ENCODE measurements at regions of chr16 and their contacts with region 1.

Region 1: GRCh38 chr16:31179747-31180459 is at the start of gene FUS:
- DNase-seq: peak; percentile 87 to 89
- H3K4me3 ChIP-seq: peak within 1 kb of the TSS; percentile 59 to 98 (median 84)
- H3K27ac ChIP-seq: peak within 1 kb of the TSS; percentile 88 to 98 (median 97)
- H3K4me1 ChIP-seq: peaks cover 25 to 26% of the 10 kb centered on the region in 2 donors
- H3K27me3 ChIP-seq: no peaks in the 10 kb centered on the region
- CTCF ChIP-seq: peak in 1 of 6 experiments; percentile 7
- POLR2A ChIP-seq: peak; percentile 97 to 99
- total RNA-seq, gene FUS: 41.7 to 88.5 (median 70.5) TPM

Region 2: GRCh38 chr16:31010585-31011325 is 169.1 kb before region 1 on chr16 and contains the start of gene STX1B:
- intact Hi-C with region 1: no loop called
- DNase-seq: no peak
- H3K4me3 ChIP-seq: no peak within 1 kb of the TSS
- H3K27ac ChIP-seq: no peak within 1 kb of the TSS
- H3K4me1 ChIP-seq: no peaks in the 10 kb centered on the region
- H3K27me3 ChIP-seq: peaks cover 6% of the 10 kb centered on the region
- CTCF ChIP-seq: no peak
- POLR2A ChIP-seq: no peak
- total RNA-seq, gene STX1B: 0.34 to 0.40 TPM in 2 of 4 donors, not detected in the others

Region 3: DNA sequence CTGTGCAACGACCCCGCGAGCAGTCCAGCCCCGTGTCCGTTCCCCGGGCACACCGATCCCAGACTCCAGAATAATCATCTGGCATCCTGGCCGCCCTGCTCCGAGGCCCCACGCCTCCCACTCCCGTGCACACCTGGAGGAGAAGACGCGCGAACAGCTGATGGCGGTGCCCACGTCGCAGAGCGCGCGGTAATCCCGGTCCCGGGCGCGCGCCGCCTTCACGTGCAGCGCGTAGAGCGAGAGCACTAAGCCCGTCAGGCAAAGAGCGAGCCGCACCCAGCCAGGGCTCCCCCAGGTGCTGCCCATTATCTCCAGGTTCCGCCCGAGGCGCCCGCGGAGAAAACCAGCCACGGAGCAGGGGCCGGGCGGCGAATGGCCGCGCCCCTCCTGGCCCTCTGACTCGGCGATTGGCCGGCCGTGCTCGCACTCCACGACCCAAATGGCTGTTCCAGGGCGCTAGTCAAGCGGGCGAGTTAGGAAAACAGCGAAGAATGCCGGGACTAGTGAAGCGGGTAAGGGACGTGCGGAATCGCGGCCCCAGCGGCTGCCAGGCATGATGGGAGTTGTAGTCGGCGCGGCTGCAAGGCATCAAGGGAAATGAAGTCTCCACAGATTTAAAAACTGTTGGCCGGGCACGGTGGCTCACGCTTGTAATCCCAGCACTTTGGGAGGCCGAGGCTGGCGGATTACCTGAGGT is 85.3 kb before region 1 on chr16 and contains the start of gene VKORC1:
- intact Hi-C with region 1: loop called (anchors 10 kb)
- DNase-seq: peak; percentile 96 to 97
- H3K4me3 ChIP-seq: peak within 1 kb of the TSS; percentile 47 to 65 (median 58)
- H3K27ac ChIP-seq: peak within 1 kb of the TSS; percentile 51 to 81 (median 75)
- H3K4me1 ChIP-seq: peaks cover 9% of the 10 kb centered on the region in 2 donors
- H3K27me3 ChIP-seq: no peaks in the 10 kb centered on the region
- CTCF ChIP-seq: no peak
- POLR2A ChIP-seq: peak in 1 of 2 donors; percentile 80
- total RNA-seq, gene VKORC1: 58.7 to 145 (median 104) TPM

Region 4: GRCh38 chr16:31459722-31460581 is 280.0 kb after region 1 on chr16:
- intact Hi-C with region 1: loop called (anchors 10 kb)
- DNase-seq: peak; percentile 100
- H3K4me3 ChIP-seq: peak overlapping the region in 2 of 3 donors; percentile 66 to 79
- H3K27ac ChIP-seq: peak overlapping the region; percentile 96 to 100 (median 98)
- H3K4me1 ChIP-seq: peaks cover 26 to 36% of the 10 kb centered on the region in 2 donors
- H3K27me3 ChIP-seq: no peaks in the 10 kb centered on the region
- CTCF ChIP-seq: no peak
- POLR2A ChIP-seq: peak in 1 of 2 donors; percentile 18